ENCODE measurements at regions of chr5 and their contacts with region 1.

Region 1: DNA sequence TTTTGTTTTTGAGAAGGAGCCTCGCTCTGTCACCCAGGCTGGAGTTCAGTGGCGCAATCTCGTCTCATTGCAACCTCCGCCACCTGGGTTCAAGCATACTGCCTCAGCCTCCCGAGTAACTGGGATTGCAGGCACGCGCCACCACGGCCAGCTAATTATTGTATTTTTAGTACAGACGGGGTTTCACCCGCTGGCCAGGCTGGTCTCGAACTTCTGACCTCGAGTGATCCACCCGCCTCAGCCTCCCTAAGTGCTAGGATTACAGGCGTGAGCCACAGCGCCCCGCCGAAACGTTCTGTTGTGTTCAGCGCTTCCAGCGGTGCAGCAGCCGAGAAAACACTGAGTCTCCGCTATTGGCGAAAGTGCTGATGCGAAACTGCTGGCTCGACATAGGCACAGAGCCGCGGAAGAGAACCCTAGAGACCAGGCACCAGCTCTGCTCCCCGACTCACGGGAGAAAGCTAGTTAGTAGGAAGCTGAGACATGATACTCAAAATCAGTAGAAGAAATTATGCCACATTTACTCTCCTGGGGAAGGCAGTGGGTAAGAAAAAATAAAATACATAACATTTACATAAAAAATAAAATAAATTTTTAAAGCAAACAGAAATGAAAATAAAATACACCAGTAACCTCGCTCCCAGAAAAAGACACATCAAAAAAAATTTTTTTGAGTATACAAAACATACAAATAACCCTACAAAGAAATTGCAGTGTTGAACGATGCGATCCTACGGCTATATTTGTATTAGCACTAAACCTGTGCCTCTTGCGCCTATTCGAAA is 31.6 kb downstream of the ANXA2R start:
- DNase-seq: no peak
- H3K4me3 ChIP-seq: peak overlapping the region; percentile 30
- H3K27me3 ChIP-seq: no peaks in the 10 kb centered on the region
- CTCF ChIP-seq: no peak

Region 2: GRCh38 chr5:42595597-42595996 is 413.0 kb before region 1 on chr5:
- CTCF ChIA-PET with region 1: no interaction called
- POLR2A ChIA-PET with region 1: no interaction called
- DNase-seq: no peak
- H3K4me3 ChIP-seq: no peak overlapping the region
- H3K27me3 ChIP-seq: no peaks in the 10 kb centered on the region
- CTCF ChIP-seq: no peak

Region 3: DNA sequence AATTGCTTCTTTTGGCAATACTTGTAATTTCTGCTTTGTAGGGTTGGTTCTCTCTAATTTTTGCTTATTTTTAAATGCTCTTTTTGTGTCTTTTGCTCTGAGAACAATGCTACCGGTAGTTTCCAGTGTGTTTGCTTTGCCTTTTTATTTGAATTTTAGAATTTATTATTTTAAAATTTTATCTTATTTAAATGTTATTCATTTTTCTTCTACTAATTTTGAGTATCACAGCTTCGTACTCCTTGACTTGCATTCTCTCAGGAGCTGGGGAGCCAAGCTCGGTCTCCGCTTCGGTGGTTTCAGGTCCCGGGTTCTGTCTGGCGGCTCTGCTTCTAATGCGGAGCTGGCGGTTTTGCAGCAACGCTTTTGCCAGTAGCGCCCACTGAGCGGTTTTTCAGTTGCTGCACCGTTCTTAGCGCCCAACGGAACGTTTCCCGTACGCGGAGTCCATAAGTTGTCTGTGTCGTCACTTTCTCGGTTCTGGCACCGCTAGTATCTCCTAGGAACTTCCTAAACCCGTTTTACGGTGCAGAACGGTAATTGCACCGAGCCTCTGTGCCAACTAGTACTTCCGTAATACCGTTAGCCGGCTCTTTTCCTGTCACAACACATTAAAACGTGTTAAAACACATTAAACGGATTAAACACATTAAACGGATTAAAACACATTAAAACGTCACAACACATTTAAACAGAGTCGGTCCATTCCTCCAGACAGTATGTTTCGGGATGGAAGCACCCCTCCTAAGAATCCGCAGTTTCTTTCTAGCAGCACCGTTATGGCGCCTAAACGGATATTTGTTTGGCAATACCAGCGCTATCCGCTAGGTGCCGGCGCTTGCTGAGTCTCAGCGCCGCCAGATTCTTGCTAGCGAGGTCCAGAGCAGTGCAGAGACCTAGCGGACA is 14.1 kb before region 1 on chr5:
- CTCF ChIA-PET with region 1: interaction called, 11 read pairs
- POLR2A ChIA-PET with region 1: interaction called, 3 read pairs
- DNase-seq: peak; percentile 52
- H3K4me3 ChIP-seq: peak overlapping the region; percentile 36
- H3K27me3 ChIP-seq: no peaks in the 10 kb centered on the region
- CTCF ChIP-seq: peak; percentile 84

Region 4: DNA sequence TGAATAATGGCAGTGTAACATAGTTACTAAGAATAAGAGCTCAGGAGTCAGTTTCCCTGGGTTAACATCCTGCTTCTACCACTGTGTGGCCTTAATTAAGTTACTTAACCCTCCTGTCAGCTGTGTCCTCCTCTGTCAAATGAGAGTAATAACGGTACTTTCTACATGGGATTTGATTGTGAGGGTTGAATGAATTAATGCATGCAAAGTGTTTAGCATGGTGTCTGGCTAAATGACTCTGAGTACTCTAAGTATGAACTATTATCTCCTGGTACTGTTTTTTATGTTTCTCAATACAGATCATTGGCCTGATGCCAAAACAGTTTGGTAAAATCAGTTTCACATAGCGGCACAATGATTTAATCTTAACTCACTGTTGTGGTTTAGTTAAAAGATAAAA is 131.7 kb after region 1 on chr5:
- CTCF ChIA-PET with region 1: no interaction called
- POLR2A ChIA-PET with region 1: interaction called, 10 read pairs
- DNase-seq: no peak
- H3K4me3 ChIP-seq: no peak overlapping the region
- H3K27me3 ChIP-seq: no peaks in the 10 kb centered on the region
- CTCF ChIP-seq: no peak

Region 5: GRCh38 chr5:43227655-43228054 is 219.1 kb after region 1 on chr5:
- CTCF ChIA-PET with region 1: no interaction called
- POLR2A ChIA-PET with region 1: no interaction called
- DNase-seq: no peak
- H3K4me3 ChIP-seq: no peak overlapping the region
- H3K27me3 ChIP-seq: no peaks in the 10 kb centered on the region
- CTCF ChIP-seq: peak; percentile 52

Measured in BJ (cell line).